MCF 10A (cell line): ENCODE measurements at regions of chr6 and their contacts with region 1.

Region 1: GRCh38 chr6:4210629-4211423 is 75.5 kb upstream of the ECI2 start:
- DNase-seq: peak; percentile 70
- H3K4me3 Mint-ChIP-seq: no peak overlapping the region
- H3K27ac Mint-ChIP-seq: no peak overlapping the region
- H3K4me1 Mint-ChIP-seq: no peaks in the 10 kb centered on the region
- H3K27me3 Mint-ChIP-seq: peaks cover 11% of the 10 kb centered on the region
- CTCF ChIP-seq: peak; percentile 63

Region 2: DNA sequence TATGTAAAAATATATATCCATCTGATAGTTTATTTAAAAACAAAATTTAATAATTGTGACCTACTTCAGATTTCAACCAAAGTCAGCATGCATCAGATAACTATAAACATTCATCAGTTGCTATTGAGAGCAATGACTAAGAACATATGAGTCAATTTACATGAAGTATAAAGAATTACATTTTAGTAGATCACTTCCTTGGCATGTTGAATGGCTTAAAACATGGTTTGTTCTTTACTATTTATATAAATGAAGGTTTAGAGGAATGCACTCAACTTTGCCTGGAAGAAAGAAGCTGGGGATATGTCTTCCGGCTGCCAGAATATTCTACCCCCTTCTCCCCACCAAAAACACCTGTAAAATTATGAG is 125.5 kb before region 1 on chr6:
- CTCF ChIA-PET with region 1: interaction called, 10 read pairs
- POLR2A ChIA-PET with region 1: no interaction called
- intact Hi-C with region 1: no loop called
- DNase-seq: no peak
- H3K4me3 Mint-ChIP-seq: no peak overlapping the region
- H3K27ac Mint-ChIP-seq: no peak overlapping the region
- H3K4me1 Mint-ChIP-seq: no peaks in the 10 kb centered on the region
- H3K27me3 Mint-ChIP-seq: no peaks in the 10 kb centered on the region
- CTCF ChIP-seq: no peak

Region 3: DNA sequence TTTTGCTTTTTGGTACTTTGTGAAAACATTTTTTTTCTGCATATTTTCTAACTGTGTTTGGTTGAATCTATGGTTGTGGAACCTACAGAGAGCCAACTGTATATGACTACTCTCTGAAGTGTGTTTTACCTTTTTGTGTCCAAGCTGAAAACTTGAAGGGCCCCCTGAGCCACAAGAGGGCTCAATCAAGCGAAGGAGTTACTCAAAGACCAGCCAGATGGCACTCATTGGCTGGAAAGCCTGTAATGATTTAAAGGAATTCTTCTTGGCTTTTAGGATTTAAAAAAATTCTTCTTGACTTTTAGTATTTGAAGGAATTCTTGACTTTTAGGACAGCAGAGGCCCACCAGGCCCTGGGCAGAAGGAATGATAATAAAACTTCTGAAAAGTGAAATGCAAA is 48.5 kb before region 1 on chr6:
- CTCF ChIA-PET with region 1: interaction called, 12 read pairs
- POLR2A ChIA-PET with region 1: no interaction called
- intact Hi-C with region 1: loop called (anchors 5 kb)
- DNase-seq: no peak
- H3K4me3 Mint-ChIP-seq: no peak overlapping the region
- H3K27ac Mint-ChIP-seq: no peak overlapping the region
- H3K4me1 Mint-ChIP-seq: no peaks in the 10 kb centered on the region
- H3K27me3 Mint-ChIP-seq: no peaks in the 10 kb centered on the region
- CTCF ChIP-seq: no peak